PC-3 (cell line): ENCODE measurements at regions of chr15 and their contacts with region 1.

Region 1: GRCh38 chr15:32994810-32995424 is 199.6 kb downstream of the FMN1 start:
- DNase-seq: peak; percentile 69
- ATAC-seq: peak; percentile 61
- H3K4me3 ChIP-seq: no peak overlapping the region
- H3K27ac ChIP-seq: no peak overlapping the region
- H3K4me1 ChIP-seq: 0 out of 2 replicates have a peak, but pooled peaks cover 3% of the 10 kb centered on the region
- H3K27me3 ChIP-seq: no peaks in the 10 kb centered on the region
- CTCF ChIP-seq: peak; percentile 81

Region 2: DNA sequence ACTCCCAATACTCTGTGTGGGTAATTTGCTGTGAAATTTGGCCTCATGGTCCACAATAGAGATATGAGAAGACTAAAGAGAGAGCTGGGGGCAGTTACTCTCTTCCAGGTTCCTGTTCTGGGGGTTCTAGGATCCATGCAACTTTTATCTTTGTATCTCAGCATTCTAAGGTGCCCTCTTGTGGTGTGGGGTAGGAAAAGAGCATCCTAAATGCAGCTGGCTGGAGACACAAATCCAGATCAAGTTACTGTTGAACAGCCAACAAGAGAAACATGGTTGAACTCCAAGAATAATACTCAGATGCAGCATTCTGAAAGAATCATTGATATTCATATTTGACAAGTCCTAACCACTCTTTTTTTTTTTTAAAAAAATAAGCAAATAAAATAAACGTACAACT is 38.9 kb before region 1 on chr15:
- CTCF ChIA-PET with region 1: no interaction called
- POLR2A ChIA-PET with region 1: no interaction called
- intact Hi-C with region 1: loop called (anchors 2 kb)
- DNase-seq: peak; percentile 75
- ATAC-seq: peak; percentile 86
- H3K4me3 ChIP-seq: no peak overlapping the region
- H3K27ac ChIP-seq: 0 out of 2 replicates have a peak overlapping the region, but pooled peaks have one; percentile 1
- H3K4me1 ChIP-seq: peaks cover 17% of the 10 kb centered on the region
- H3K27me3 ChIP-seq: no peaks in the 10 kb centered on the region
- CTCF ChIP-seq: peak; percentile 89